ENCODE measurements at regions of chr14 and their contacts with region 1.

Region 1: DNA sequence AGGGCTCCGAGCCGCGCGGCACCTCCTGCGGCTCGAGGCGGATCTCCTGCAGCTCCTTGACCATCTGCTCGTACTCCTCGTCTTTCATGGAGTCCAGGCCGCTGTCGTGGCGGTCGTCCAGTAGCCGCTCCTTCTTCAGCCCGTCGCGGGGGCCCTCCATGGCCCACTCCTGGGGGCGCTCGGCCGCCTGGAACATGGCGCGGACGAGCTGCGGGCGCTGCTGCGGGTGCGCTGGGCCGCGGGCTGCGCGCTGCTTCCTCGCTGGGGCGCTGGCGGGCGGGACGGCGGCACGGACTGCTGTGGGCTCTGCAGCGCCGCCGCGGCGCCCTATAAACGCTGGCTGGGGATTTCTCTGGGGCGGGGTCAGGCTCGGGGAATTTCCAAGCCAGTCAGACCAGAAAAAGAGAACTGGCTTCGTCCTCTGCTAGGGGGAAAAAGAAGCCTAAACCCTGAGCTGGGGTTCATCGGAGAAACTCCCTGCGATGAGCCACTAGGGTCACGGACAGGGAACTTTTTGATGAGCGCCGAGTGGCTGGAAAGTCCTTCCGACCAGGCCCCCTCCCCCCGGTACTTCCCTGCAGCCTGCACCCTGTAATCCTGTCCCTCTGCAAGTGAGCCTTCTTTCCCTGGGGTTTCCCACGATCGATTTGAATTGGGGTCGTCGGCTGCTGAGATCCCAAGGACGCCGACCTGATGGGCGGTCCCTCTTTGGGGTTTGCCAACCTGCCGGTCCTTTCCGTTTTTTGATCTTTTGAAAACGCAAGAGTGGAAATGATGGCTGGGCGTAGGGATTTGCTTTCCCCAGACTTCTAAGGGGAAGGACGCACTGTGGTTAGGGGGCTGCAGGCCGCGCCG is at the start of gene NFKBIA:
- DNase-seq: peak in 1 of 2 experiments; percentile 83
- H3K4me3 ChIP-seq: peak within 1 kb of the TSS; percentile 77 to 99 (median 90)
- H3K27ac ChIP-seq: peak within 1 kb of the TSS; percentile 96
- H3K4me1 ChIP-seq: peaks cover 4 to 19% (median 12%) of the 10 kb centered on the region in 4 experiments
- H3K27me3 ChIP-seq: no peaks in the 10 kb centered on the region
- CTCF ChIP-seq: peak; percentile 37 to 49 (median 37); a peak in 3 of 4 replicates
- EP300 ChIP-seq: no peak
- POLR2A ChIP-seq: no peak; a peak in 1 of 3 replicates
- RAD21 ChIP-seq: peak in 1 of 2 experiments; percentile 32; a peak in 1 of 4 replicates
- total RNA-seq, gene NFKBIA: 24.4 and 25.9 TPM in 2 replicates

Region 2: DNA sequence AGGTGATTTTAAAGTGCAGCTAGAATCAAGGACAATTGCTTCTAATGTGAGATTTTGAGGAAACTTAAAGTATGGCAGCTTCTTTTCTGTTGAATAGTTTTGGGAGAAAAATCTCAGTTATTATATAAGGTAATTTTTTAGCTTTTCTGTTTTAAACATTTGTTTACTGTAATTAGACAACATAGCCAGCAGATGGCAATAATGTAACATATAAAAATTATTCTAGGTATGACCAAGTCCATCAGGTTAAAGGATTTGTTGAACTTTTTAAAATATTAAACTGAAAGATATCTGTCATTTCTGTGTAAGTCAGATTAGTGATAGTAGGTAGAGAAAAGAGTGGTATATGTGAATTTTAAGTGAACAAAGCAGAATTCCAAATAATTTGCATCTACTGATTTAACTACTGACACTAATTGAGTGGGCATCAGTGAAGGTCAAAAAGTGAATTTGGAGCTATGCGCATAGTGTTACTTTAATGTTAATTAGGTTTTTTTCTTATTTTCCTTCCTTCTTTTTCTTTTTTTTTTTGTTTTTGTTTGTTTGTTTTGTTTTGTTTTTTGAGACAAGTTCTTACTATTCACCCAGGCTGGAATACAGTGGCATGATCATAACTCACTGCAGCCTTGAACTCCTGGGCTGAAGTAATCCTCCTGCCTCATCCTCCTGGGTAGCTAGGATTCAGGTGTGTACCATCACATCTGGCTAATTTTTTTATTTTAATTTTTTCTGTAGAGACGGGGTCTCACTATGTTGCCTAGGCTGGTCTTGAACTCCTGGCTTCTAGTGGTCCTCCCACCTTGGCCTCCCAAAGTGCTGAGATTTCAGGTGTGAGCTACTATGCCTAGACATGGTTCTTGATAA is 263.7 kb before region 1 on chr14:
- CTCF ChIA-PET with region 1: interaction called, 23 read pairs
- POLR2A ChIA-PET with region 1: interaction called, 3 read pairs
- DNase-seq: no peak
- H3K4me3 ChIP-seq: no peak overlapping the region
- H3K27ac ChIP-seq: no peak overlapping the region
- H3K4me1 ChIP-seq: no peaks in the 10 kb centered on the region; a peak in 1 of 7 replicates
- H3K27me3 ChIP-seq: no peaks in the 10 kb centered on the region
- CTCF ChIP-seq: peak in 1 of 3 experiments; percentile 12; a peak in 1 of 4 replicates
- EP300 ChIP-seq: no peak
- POLR2A ChIP-seq: no peak
- RAD21 ChIP-seq: peak in 1 of 2 experiments; percentile 51; a peak in 3 of 4 replicates

Region 3: GRCh38 chr14:35292051-35292769 is 112.5 kb before region 1 on chr14 and contains the start of gene PSMA6:
- CTCF ChIA-PET with region 1: interaction called, 3 read pairs
- POLR2A ChIA-PET with region 1: interaction called, 21 read pairs
- DNase-seq: peak; percentile 97
- H3K4me3 ChIP-seq: peak within 1 kb of the TSS; percentile 62 to 98 (median 94)
- H3K27ac ChIP-seq: peak within 1 kb of the TSS; percentile 86
- H3K4me1 ChIP-seq: no peaks in the 10 kb centered on the region
- H3K27me3 ChIP-seq: no peaks in the 10 kb centered on the region
- CTCF ChIP-seq: no peak
- EP300 ChIP-seq: no peak
- POLR2A ChIP-seq: peak; percentile 53 to 84
- RAD21 ChIP-seq: peak in 1 of 2 experiments; percentile 4; a peak in 2 of 4 replicates
- total RNA-seq, gene PSMA6: 213 and 238 TPM in 2 replicates

Region 4: DNA sequence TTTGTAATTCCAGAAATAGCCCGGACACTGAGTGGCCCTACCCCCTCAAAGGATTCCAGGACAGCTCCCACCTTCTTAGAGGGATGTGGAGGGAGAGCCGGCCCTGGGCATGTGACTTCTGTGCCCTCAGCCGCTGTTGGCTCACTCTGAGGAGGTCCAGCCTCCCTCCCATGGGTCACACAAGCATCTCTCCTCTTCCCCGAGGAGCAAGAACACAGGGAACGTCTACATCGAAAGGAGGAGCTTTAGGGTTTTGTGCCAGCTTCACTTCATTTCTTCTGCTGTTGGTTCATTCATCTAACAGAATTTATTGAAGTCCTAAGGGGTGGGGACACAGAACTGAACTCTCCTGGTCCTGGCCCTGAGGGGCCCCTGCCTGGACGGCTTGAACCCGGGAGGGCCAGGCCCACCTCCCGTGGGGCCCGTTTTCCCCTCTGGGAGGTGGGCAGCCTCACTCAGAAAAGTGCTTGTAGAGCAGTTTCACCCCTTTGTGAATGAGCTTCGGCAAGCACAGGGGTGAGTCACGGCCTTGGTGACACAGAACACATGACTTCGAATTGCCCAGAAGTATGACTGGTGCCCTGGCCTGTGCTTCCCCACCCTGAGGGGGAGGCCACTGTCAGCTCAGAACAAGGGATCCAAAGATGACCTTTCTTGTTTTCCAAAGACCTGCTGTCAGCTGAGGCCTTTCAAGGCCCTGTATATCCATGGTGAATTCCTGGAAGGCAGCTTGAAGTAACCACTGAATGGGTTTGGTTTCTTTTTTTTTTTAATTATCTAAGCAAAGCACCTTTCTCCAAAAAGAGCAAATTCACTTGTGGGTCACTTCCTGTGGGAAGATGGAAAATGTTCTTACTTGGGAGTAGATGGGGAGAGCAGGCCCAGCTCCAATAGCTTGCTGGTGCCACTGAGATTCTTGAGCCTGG is 39.3 kb before region 1 on chr14:
- CTCF ChIA-PET with region 1: interaction called, 6 read pairs
- POLR2A ChIA-PET with region 1: interaction called, 30 read pairs
- DNase-seq: no peak
- H3K4me3 ChIP-seq: no peak overlapping the region
- H3K27ac ChIP-seq: no peak overlapping the region
- H3K4me1 ChIP-seq: peaks cover 0 to 18% (median 7%) of the 10 kb centered on the region in 4 experiments; a peak in 5 of 7 replicates
- H3K27me3 ChIP-seq: no peaks in the 10 kb centered on the region
- CTCF ChIP-seq: no peak
- EP300 ChIP-seq: no peak
- POLR2A ChIP-seq: no peak
- RAD21 ChIP-seq: no peak

Region 5: DNA sequence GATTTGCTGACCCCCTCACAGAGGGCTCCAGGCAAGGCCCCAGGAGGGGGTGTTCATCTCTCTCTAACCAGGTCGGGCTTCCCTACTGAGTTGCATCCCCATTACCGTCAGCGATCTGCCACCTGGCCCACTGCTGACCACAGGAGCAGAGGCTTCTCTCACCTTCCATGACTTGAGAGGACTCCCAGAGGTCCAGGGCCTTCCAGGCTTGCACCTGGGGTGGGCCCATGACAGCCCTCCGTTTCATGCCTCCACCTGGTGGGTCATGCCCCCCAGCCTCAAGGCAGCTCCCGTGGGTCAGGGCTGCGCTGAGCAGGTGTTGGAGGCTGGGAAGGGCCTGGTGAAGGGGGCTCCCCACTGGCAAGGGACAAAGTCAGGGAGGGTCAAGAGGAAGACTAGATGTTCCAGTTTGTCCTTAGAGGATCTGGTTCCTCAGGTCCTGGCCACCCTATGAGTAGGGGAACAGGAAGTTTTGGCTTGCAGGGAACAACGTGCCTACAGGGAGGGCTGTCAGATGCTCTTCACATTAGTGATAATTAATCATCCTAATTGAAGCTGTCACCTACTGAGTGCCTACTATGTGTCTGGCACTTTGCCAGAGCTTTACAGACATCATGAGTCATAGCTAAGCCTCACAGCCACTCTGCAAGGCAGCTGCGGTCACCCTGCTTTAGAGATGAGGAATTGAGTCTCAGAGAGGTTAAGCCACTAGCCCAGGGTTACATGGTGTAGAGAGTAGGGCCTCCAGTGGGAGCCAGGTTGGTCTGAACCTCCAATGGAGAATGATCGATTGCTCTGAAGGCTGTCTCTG is 13.9 kb before region 1 on chr14:
- CTCF ChIA-PET with region 1: interaction called, 11 read pairs
- POLR2A ChIA-PET with region 1: interaction called, 48 read pairs
- DNase-seq: no peak
- H3K4me3 ChIP-seq: no peak overlapping the region
- H3K27ac ChIP-seq: no peak overlapping the region
- H3K4me1 ChIP-seq: peaks cover 0 to 3% (median under 1%) of the 10 kb centered on the region in 4 experiments; a peak in 5 of 7 replicates
- H3K27me3 ChIP-seq: no peaks in the 10 kb centered on the region
- CTCF ChIP-seq: no peak
- EP300 ChIP-seq: no peak
- POLR2A ChIP-seq: no peak
- RAD21 ChIP-seq: no peak

Region 6: DNA sequence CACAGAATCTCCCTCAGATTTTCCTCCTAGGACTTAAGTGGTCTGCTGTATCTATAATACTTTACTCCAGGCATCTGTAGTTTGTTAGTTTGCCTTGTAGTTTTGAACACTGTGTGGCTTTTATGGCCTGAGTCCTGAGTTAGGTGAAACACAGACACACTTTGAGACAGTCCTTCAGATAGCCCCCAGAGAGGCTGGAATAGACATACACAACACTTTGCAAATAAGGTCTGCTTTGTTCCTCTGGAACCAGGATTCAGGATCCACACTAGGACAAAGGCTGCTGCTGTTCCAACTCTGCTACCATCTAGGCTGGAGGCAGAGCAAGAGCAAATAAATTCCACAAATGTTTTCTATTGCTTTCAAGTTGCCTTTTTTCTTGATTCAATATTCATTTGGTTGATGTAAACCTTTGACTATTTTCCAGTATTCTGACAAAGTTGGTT is 87.9 kb after region 1 on chr14:
- CTCF ChIA-PET with region 1: no interaction called
- POLR2A ChIA-PET with region 1: no interaction called
- DNase-seq: no peak
- H3K4me3 ChIP-seq: no peak overlapping the region
- H3K27ac ChIP-seq: no peak overlapping the region
- H3K4me1 ChIP-seq: no peaks in the 10 kb centered on the region
- H3K27me3 ChIP-seq: no peaks in the 10 kb centered on the region
- CTCF ChIP-seq: no peak
- EP300 ChIP-seq: no peak
- POLR2A ChIP-seq: no peak
- RAD21 ChIP-seq: no peak

Region 7: GRCh38 chr14:35594616-35595015 is 189.9 kb after region 1 on chr14:
- CTCF ChIA-PET with region 1: no interaction called
- POLR2A ChIA-PET with region 1: no interaction called
- DNase-seq: no peak
- H3K4me3 ChIP-seq: no peak overlapping the region
- H3K27ac ChIP-seq: no peak overlapping the region
- H3K4me1 ChIP-seq: no peaks in the 10 kb centered on the region
- H3K27me3 ChIP-seq: no peaks in the 10 kb centered on the region
- CTCF ChIP-seq: no peak
- EP300 ChIP-seq: no peak
- POLR2A ChIP-seq: no peak
- RAD21 ChIP-seq: no peak

Measured in H1 (cell line).